Caco-2 (cell line): ENCODE measurements at regions of chr2 and their contacts with region 1.

Region 1: DNA sequence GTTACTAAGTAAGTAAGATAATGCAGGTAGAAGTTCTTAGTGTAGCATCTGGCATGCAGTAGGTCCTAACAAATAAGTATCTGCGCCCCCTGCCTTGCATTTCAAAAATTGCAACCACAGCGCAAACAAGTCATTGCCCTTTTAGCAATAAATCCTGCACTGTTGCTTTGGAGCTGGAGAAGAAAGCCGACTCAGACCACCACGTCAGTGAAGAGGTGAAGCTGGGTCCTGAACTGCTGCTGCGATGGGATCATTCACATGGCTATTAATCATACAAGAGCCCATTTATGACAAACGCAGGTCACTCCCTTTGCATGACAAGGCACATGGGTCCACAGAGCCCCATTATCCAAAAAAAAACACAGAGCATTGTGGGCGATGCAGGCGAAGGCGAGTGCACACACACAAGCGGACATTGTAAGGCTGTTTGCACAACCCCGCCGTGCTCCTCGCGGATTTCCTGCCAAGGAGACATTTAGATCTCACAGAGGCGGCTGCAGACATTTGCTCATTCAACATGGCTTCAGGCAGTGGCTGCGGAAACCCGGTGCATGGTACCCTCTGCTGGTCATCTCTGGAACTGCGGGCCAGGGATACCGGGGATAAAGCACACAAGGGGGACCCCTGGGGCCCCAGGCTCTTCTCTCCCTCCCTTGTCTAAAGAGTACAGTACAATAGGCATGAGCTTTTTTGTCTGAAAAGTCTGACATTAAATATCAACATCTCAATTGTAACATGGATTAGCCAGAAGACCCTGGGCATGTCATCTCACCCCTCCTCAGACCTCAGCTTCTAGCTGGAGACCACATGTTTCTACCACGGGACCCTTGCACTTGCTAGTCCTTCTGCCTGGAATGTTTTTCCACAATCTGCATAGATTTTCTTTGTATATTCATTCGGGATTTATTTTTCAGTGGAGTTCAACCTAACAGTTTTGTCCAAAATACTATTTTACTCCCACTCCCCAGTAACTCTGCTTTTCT is 56.7 kb downstream of the CYRIA start:
- DNase-seq: peak; percentile 86 to 92
- H3K4me3 ChIP-seq: peak overlapping the region; percentile 53
- H3K4me3 Mint-ChIP-seq: peak overlapping the region; percentile 77
- H3K27ac Mint-ChIP-seq: peak overlapping the region; percentile 34
- H3K4me1 ChIP-seq: no peaks in the 10 kb centered on the region
- H3K4me1 Mint-ChIP-seq: peaks cover 7% of the 10 kb centered on the region
- H3K27me3 ChIP-seq: no peaks in the 10 kb centered on the region
- H3K27me3 Mint-ChIP-seq: peaks cover 7% of the 10 kb centered on the region
- CTCF ChIP-seq: peak; percentile 93 to 95

Region 2: GRCh38 chr2:15799432-15799827 is 809.5 kb before region 1 on chr2:
- CTCF ChIA-PET with region 1: no interaction called
- POLR2A ChIA-PET with region 1: no interaction called
- intact Hi-C with region 1: loop called (anchors 2 kb)
- DNase-seq: no peak
- H3K4me3 ChIP-seq: no peak overlapping the region
- H3K4me3 Mint-ChIP-seq: no peak overlapping the region
- H3K27ac Mint-ChIP-seq: peak overlapping the region; percentile 62
- H3K4me1 ChIP-seq: peaks cover 49% of the 10 kb centered on the region
- H3K4me1 Mint-ChIP-seq: peaks cover 39% of the 10 kb centered on the region
- H3K27me3 ChIP-seq: no peaks in the 10 kb centered on the region
- H3K27me3 Mint-ChIP-seq: no peaks in the 10 kb centered on the region
- CTCF ChIP-seq: no peak

Region 3: GRCh38 chr2:16293398-16293797 is 315.6 kb before region 1 on chr2:
- CTCF ChIA-PET with region 1: no interaction called
- POLR2A ChIA-PET with region 1: no interaction called
- intact Hi-C with region 1: loop called (anchors 10 kb)
- DNase-seq: no peak
- H3K4me3 ChIP-seq: no peak overlapping the region
- H3K4me3 Mint-ChIP-seq: no peak overlapping the region
- H3K27ac Mint-ChIP-seq: no peak overlapping the region
- H3K4me1 ChIP-seq: peaks cover 20% of the 10 kb centered on the region
- H3K4me1 Mint-ChIP-seq: peaks cover 22% of the 10 kb centered on the region
- H3K27me3 ChIP-seq: no peaks in the 10 kb centered on the region
- H3K27me3 Mint-ChIP-seq: no peaks in the 10 kb centered on the region
- CTCF ChIP-seq: no peak

Region 4: DNA sequence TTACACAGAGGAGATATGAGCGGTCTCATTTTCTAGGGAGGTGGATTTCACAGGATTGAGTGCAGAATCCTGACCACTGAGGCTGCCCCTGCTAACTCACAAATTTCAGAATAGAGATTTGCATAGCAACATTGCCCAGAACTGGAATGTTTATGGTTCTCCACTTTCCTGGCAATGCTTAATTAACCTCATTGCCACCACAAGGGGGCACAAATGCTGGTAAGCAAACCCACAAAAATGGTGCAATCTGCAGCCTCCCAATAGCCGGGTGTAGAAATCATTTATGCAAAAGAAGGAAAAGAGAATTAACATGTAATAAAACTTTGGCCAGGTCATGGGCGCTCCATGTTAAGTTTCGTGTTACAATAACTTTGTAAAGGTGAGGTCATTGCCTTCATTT is 55.7 kb before region 1 on chr2:
- CTCF ChIA-PET with region 1: interaction called, 4 read pairs
- POLR2A ChIA-PET with region 1: no interaction called
- intact Hi-C with region 1: loop called (anchors 1 kb)
- DNase-seq: peak; percentile 51 to 61
- H3K4me3 ChIP-seq: no peak overlapping the region
- H3K4me3 Mint-ChIP-seq: no peak overlapping the region
- H3K27ac Mint-ChIP-seq: no peak overlapping the region
- H3K4me1 ChIP-seq: no peaks in the 10 kb centered on the region
- H3K4me1 Mint-ChIP-seq: no peaks in the 10 kb centered on the region
- H3K27me3 ChIP-seq: no peaks in the 10 kb centered on the region
- H3K27me3 Mint-ChIP-seq: peaks cover 13% of the 10 kb centered on the region
- CTCF ChIP-seq: peak; percentile 63 to 68

Region 5: DNA sequence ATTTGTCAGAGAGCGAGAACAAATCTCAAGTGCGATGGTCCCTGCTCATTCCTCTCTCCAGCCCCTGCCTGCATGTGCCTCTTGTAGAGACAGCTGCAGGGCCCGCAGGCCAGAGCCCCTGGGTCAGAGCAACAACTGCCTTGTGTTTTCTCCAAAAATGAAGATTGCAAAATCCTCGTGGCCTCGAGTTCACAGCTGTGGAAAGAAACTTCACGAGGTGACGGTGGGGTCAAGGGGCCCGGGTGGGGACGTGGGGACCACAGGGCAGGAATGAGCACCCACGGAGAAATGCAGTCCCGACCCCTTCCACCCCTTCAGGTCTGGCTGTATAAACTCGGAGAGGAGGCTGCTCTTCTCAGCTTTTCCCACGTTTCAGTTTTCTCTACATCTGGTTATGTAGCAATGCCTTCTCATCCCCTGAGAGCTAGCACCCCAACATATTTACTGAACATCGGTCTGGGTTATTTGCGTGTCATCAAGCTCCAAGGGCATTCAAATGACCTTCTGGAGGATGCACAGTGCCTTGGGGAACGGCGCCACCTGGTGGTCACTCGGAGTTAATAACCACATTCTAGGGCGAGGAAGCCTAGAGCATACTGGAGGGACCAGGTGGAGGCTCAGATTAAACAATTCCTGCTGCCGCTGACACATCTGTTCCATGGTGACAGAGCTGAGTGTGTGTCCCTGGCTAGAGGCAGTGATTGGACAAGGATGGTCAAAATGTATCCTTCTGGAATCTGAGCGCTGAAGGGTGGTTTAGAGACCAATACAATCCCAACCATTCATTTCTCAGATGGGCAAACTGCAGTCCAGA is 148.1 kb after region 1 on chr2:
- CTCF ChIA-PET with region 1: interaction called, 67 read pairs
- POLR2A ChIA-PET with region 1: interaction called, 3 read pairs
- intact Hi-C with region 1: loop called (anchors 1 kb)
- DNase-seq: peak; percentile 67 to 80
- H3K4me3 ChIP-seq: no peak overlapping the region
- H3K4me3 Mint-ChIP-seq: no peak overlapping the region
- H3K27ac Mint-ChIP-seq: no peak overlapping the region
- H3K4me1 ChIP-seq: no peaks in the 10 kb centered on the region
- H3K4me1 Mint-ChIP-seq: peaks cover 5% of the 10 kb centered on the region
- H3K27me3 ChIP-seq: no peaks in the 10 kb centered on the region
- H3K27me3 Mint-ChIP-seq: peaks cover 17% of the 10 kb centered on the region
- CTCF ChIP-seq: peak; percentile 85 to 97